ENCODE measurements at regions of chr1 and their contacts with region 1.

Region 1: DNA sequence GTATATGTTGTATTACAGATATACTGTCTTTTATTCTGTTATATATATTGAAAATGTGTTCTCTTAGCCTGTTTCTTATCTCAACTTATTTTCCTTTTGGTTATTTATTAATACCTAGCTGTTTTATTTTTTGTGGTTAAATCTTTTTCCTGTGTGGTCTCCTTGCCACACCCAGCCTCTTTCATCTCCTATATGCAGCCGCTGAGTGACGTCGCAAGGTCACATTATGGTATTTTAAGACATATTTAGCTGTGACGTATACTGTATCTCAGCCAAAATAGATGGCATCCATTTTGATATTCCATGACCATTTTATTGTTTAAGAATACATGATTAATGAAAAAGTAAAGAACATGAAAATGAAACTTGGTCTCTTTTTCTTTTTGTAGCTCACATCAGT is 29.1 kb downstream of the CENPF start:
- DNase-seq: peak; percentile 63
- H3K4me3 Mint-ChIP-seq: peak overlapping the region; percentile 19
- H3K27ac Mint-ChIP-seq: peak overlapping the region; percentile 69
- H3K4me1 Mint-ChIP-seq: peaks cover 25% of the 10 kb centered on the region
- H3K27me3 Mint-ChIP-seq: no peaks in the 10 kb centered on the region

Region 2: GRCh38 chr1:214454619-214455396 is 177.3 kb before region 1 on chr1:
- CTCF ChIA-PET with region 1: no interaction called
- POLR2A ChIA-PET with region 1: no interaction called
- DNase-seq: no peak
- H3K4me3 Mint-ChIP-seq: no peak overlapping the region
- H3K27ac Mint-ChIP-seq: no peak overlapping the region
- H3K4me1 Mint-ChIP-seq: peaks cover 3% of the 10 kb centered on the region
- H3K27me3 Mint-ChIP-seq: peaks cover 8% of the 10 kb centered on the region

Region 3: GRCh38 chr1:214602764-214603657 is 29.1 kb before region 1 on chr1 and contains the start of gene CENPF:
- CTCF ChIA-PET with region 1: interaction called, 14 read pairs
- POLR2A ChIA-PET with region 1: interaction called, 10 read pairs
- DNase-seq: peak; percentile 97
- H3K4me3 Mint-ChIP-seq: peak within 1 kb of the TSS; percentile 85
- H3K27ac Mint-ChIP-seq: peak within 1 kb of the TSS; percentile 87
- H3K4me1 Mint-ChIP-seq: peaks cover 24% of the 10 kb centered on the region
- H3K27me3 Mint-ChIP-seq: no peaks in the 10 kb centered on the region
- total RNA-seq, gene CENPF: 125 to 135 TPM

Region 4: DNA sequence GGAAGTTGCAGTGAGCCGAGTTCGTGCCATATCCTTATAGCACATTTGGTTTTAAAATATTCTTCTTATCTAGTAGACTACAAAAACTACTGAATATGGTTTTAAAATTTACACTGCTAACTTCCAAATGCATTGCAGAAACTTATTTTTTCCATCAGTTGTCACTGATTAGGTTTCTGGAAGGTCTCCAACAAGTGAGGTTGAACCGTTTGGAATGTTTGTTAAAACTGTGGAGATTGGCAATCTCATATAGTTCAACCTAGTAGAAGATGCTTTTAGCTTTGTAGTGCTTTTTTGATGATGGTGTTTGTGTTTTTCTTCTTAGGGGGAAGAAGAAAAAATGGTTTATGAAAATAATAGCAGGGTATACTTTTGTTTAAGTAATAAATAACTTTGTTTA is 16.2 kb before region 1 on chr1:
- CTCF ChIA-PET with region 1: interaction called, 10 read pairs
- POLR2A ChIA-PET with region 1: no interaction called
- DNase-seq: no peak
- H3K4me3 Mint-ChIP-seq: no peak overlapping the region
- H3K27ac Mint-ChIP-seq: no peak overlapping the region
- H3K4me1 Mint-ChIP-seq: peaks cover 16% of the 10 kb centered on the region
- H3K27me3 Mint-ChIP-seq: no peaks in the 10 kb centered on the region